HepG2 (cell line): ENCODE measurements at regions of chr2 and their contacts with region 1.

Region 1: DNA sequence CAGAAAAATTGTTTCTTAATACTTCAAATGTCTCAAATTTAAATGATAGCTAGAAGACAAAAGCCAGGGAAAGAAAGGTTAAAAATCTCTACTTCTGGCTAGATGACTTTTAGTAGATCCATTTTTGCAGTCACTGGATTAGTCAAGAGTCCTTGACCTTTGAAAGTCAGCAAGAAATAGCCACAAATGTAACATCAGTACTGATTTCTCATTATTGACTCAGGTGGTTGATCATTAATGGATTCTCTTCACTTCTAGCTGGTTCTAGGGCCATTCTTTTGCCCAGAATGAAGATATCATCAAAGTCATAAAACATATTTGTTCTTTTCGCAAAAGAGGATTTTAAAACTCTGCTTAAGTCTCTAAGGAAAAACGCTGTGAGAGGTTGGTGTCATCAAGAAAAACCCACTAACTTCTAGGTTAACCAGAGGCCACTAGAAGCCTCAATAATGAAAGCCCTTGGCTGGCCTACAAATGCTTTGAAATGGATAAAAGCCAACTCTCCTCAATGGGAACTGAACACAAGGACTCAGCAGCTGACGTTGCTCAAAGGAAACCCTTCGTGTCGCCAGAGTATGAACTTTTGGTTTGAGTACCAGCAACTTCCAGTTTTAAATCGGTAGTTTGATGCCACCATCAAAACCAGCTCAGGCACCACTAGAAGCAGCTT is 66.3 kb downstream of the IRS1 start:
- DNase-seq: peak; percentile 98
- ATAC-seq: peak; percentile 92
- H3K4me3 ChIP-seq: peak overlapping the region in 2 of 3 experiments; percentile 27 to 45; a peak in 2 of 6 replicates
- H3K27ac ChIP-seq: peak overlapping the region; percentile 82
- H3K4me1 ChIP-seq: peaks cover 75% of the 10 kb centered on the region
- H3K27me3 ChIP-seq: no peaks in the 10 kb centered on the region
- CTCF ChIP-seq: peak; percentile 31; the same call in 1 of the 2 replicates
- EP300 ChIP-seq: peak; percentile 87 to 99
- POLR2A ChIP-seq: 0 out of 4 replicates have a peak, but pooled peaks of 1 of the 2 experiments have one; percentile 25
- RAD21 ChIP-seq: peak; percentile 31; the same call in 1 of the 2 replicates

Region 2: GRCh38 chr2:226159754-226160479 is 573.4 kb before region 1 on chr2:
- CTCF ChIA-PET with region 1: no interaction called
- POLR2A ChIA-PET with region 1: interaction called, 7 read pairs
- in situ Hi-C with region 1: no loop called
- intact Hi-C with region 1: loop called (anchors 5 kb)
- DNase-seq: peak; percentile 99
- ATAC-seq: peak; percentile 97
- H3K4me3 ChIP-seq: peak overlapping the region in 2 of 3 experiments; percentile 3 to 14; a peak in 1 of 6 replicates
- H3K27ac ChIP-seq: peak overlapping the region; percentile 97
- H3K4me1 ChIP-seq: peaks cover 73% of the 10 kb centered on the region
- H3K27me3 ChIP-seq: no peaks in the 10 kb centered on the region; a peak in 1 of 5 replicates
- CTCF ChIP-seq: no peak
- EP300 ChIP-seq: peak; percentile 94 to 100; a peak in 3 of 4 replicates
- POLR2A ChIP-seq: no peak
- RAD21 ChIP-seq: 0 out of 2 replicates have a peak, but pooled peaks have one; percentile 9

Region 3: GRCh38 chr2:226514939-226515338 is 218.4 kb before region 1 on chr2:
- CTCF ChIA-PET with region 1: no interaction called
- POLR2A ChIA-PET with region 1: no interaction called
- in situ Hi-C with region 1: no loop called
- intact Hi-C with region 1: loop called (anchors 1 kb)
- DNase-seq: no peak
- ATAC-seq: peak; percentile 38
- H3K4me3 ChIP-seq: no peak overlapping the region
- H3K27ac ChIP-seq: peak overlapping the region; percentile 89
- H3K4me1 ChIP-seq: peaks cover 35% of the 10 kb centered on the region
- H3K27me3 ChIP-seq: no peaks in the 10 kb centered on the region
- CTCF ChIP-seq: no peak
- EP300 ChIP-seq: no peak
- POLR2A ChIP-seq: no peak
- RAD21 ChIP-seq: 0 out of 2 replicates have a peak, but pooled peaks have one; percentile 10

Region 4: GRCh38 chr2:226583715-226584114 is 149.6 kb before region 1 on chr2:
- CTCF ChIA-PET with region 1: no interaction called
- POLR2A ChIA-PET with region 1: interaction called, 6 read pairs
- in situ Hi-C with region 1: no loop called
- intact Hi-C with region 1: loop called (anchors 1 kb)
- DNase-seq: peak; percentile 94
- ATAC-seq: peak; percentile 98
- H3K4me3 ChIP-seq: no peak overlapping the region
- H3K27ac ChIP-seq: peak overlapping the region; percentile 68
- H3K4me1 ChIP-seq: peaks cover 65% of the 10 kb centered on the region
- H3K27me3 ChIP-seq: no peaks in the 10 kb centered on the region
- CTCF ChIP-seq: no peak
- EP300 ChIP-seq: peak in 1 of 2 experiments; percentile 94; a peak in 2 of 4 replicates
- POLR2A ChIP-seq: no peak
- RAD21 ChIP-seq: no peak; the same call in 1 of the 2 replicates

Region 5: DNA sequence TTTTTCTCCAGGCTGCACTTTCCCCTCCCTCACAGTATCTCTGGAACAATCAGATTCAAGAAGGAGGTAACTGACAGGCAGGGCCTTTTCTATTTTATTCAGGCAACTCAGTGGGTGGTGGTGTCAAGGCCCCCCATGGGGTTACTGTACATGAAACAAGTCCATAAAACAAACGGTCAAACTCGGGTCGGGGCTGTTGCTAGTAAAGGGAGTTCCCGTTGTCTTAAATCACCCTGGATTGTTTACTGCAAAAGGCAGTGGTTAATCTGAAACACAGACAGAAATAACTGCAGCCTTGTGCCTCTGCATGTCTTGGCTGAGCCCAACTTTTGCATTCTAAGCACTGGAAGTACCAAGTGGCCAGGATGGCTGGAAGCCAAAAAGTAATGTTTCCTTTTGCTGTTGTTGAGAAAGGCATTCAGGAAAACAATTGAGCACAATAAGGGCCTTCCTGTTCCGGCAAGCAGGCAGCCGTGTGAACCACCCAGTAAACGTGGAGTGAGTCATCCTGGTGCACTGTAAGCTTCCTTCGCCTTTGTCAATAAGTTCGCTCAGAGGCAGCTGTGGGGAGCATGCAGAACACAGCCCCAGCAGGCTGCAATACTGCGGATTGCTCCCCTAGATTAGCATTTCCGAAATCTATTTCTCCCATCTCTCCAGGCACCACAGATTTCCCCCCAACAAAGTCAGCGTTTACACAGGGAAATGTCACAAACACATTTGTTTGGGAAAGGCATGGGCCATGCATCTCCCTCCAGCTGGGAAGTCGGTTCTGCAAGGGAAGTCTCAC is 83.3 kb before region 1 on chr2:
- CTCF ChIA-PET with region 1: no interaction called
- POLR2A ChIA-PET with region 1: interaction called, 4 read pairs
- in situ Hi-C with region 1: no loop called
- intact Hi-C with region 1: loop called (anchors 10 kb)
- DNase-seq: peak; percentile 90
- ATAC-seq: peak; percentile 99
- H3K4me3 ChIP-seq: no peak overlapping the region
- H3K27ac ChIP-seq: peak overlapping the region; percentile 59
- H3K4me1 ChIP-seq: peaks cover 56% of the 10 kb centered on the region
- H3K27me3 ChIP-seq: no peaks in the 10 kb centered on the region
- CTCF ChIP-seq: no peak
- EP300 ChIP-seq: peak in 1 of 2 experiments; percentile 84; a peak in 1 of 4 replicates
- POLR2A ChIP-seq: peak in 1 of 2 experiments; percentile 25; a peak in 1 of 4 replicates
- RAD21 ChIP-seq: no peak; the same call in 1 of the 2 replicates

Region 6: DNA sequence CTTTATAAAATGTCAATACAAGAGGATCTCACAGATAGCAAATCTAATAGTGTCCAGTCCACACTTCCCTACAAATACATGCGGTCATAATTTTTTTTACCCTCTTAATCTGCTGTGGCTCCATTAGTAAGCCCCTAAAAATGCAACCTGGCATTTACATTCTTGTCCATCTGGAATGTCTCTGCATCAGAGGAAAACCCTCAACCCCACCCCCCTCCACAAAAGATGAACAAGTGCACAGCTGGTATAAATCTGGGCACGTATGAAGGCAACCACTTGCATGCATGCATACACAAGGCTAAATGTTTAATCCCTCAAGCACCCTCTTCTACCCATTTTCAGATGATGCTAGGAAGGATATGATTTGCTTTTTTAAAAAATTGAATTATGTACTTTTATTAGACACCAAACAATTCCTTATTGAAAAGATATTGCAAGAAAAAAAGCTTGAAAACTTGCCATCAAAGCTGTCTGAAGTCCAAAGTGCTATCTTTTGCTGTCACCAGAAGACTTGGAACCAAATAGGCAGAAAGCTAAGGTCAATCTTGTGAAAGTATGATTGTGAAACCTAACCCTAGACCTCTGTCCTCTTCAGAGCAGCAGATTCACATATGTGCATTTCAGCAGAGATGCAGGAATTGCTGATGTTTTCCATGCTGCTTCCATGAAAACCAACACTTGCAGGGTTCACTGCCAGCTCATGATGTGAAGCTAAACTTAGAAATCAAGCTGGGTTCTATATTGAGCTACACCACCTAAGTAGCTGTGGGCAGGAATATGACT is 27.3 kb after region 1 on chr2:
- CTCF ChIA-PET with region 1: no interaction called
- POLR2A ChIA-PET with region 1: interaction called, 15 read pairs
- in situ Hi-C with region 1: no loop called
- intact Hi-C with region 1: no loop called
- DNase-seq: peak; percentile 90
- ATAC-seq: peak; percentile 99
- H3K4me3 ChIP-seq: peak overlapping the region in 1 of 3 experiments; percentile 5; a peak in 1 of 6 replicates
- H3K27ac ChIP-seq: peak overlapping the region; percentile 52
- H3K4me1 ChIP-seq: peaks cover 45% of the 10 kb centered on the region
- H3K27me3 ChIP-seq: no peaks in the 10 kb centered on the region
- CTCF ChIP-seq: 0 out of 2 replicates have a peak, but pooled peaks have one; percentile 6
- EP300 ChIP-seq: peak; percentile 95 to 97; a peak in 3 of 4 replicates
- POLR2A ChIP-seq: no peak
- RAD21 ChIP-seq: no peak; the same call in 1 of the 2 replicates

Region 7: DNA sequence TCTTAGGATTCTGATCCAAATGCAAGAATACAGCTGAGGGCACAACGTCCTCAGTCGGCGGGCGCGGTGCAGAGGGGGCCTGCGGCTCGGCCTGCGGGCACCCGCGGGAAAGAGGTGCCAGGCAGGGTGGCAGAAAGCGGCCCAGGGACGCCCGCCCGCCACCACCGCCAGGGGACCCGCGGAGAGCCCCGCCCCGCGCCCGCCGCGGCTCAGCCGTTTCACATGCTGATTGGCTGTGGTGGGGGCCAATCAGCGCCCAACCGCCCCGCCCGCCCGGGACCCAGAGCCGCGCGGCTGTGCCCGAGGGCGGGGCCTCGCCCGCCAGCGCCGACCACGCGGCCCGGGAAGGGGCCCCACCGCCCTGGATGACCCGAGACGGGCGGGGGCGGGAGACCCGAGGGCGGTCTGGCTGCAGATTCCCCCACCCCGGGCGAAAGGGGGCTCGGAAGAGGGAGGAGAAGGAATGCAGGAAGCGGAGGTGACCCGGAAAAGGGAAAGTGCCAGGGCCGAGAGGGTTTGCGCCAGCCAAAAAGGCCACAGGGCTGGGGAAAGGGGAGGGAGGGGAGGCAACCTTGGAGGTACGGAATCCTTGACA is 58.3 kb after region 1 on chr2:
- CTCF ChIA-PET with region 1: no interaction called
- POLR2A ChIA-PET with region 1: interaction called, 10 read pairs
- in situ Hi-C with region 1: loop called (anchors 10 kb)
- intact Hi-C with region 1: no loop called
- DNase-seq: no peak
- ATAC-seq: no peak
- H3K4me3 ChIP-seq: no peak overlapping the region
- H3K27ac ChIP-seq: peak overlapping the region; percentile 26
- H3K4me1 ChIP-seq: peaks cover 74% of the 10 kb centered on the region
- H3K27me3 ChIP-seq: no peaks in the 10 kb centered on the region
- CTCF ChIP-seq: no peak
- EP300 ChIP-seq: no peak
- POLR2A ChIP-seq: no peak
- RAD21 ChIP-seq: no peak

Region 8: DNA sequence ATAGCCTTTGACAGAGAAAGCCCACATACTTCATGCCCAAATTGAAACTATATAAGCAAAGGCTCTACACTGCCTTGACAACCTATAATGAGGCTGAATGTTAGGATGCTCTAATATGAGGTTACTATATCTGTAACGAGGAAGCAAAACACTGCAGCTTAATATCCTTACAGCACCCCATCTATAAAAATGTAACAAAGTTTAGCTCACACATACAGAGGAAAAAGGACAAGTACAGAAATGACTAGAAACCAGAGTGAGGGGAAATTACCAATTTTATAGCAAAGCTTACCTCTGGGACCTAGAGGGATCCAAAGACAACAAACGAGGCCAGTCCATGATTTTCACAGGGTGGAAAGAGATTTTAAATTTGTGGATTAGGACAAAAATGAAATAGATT is 292.2 kb after region 1 on chr2:
- CTCF ChIA-PET with region 1: no interaction called
- POLR2A ChIA-PET with region 1: no interaction called
- in situ Hi-C with region 1: no loop called
- intact Hi-C with region 1: no loop called
- DNase-seq: no peak
- ATAC-seq: no peak
- H3K4me3 ChIP-seq: no peak overlapping the region
- H3K27ac ChIP-seq: no peak overlapping the region
- H3K4me1 ChIP-seq: no peaks in the 10 kb centered on the region
- H3K27me3 ChIP-seq: peaks cover 0 to 3% of the 10 kb centered on the region in 2 experiments; a peak in 1 of 5 replicates
- CTCF ChIP-seq: no peak
- EP300 ChIP-seq: no peak
- POLR2A ChIP-seq: no peak
- RAD21 ChIP-seq: no peak